ENCODE measurements at regions of chr5 and their contacts with region 1.

Region 1: GRCh38 chr5:78984439-78985115 is 533 bp downstream of the ARSB start:
- DNase-seq: peak; percentile 86
- ATAC-seq: peak; percentile 72
- H3K4me3 Mint-ChIP-seq: peak overlapping the region; percentile 82
- H3K27ac Mint-ChIP-seq: peak overlapping the region; percentile 88
- H3K4me1 Mint-ChIP-seq: peaks cover 40% of the 10 kb centered on the region
- H3K27me3 Mint-ChIP-seq: no peaks in the 10 kb centered on the region

Region 2: DNA sequence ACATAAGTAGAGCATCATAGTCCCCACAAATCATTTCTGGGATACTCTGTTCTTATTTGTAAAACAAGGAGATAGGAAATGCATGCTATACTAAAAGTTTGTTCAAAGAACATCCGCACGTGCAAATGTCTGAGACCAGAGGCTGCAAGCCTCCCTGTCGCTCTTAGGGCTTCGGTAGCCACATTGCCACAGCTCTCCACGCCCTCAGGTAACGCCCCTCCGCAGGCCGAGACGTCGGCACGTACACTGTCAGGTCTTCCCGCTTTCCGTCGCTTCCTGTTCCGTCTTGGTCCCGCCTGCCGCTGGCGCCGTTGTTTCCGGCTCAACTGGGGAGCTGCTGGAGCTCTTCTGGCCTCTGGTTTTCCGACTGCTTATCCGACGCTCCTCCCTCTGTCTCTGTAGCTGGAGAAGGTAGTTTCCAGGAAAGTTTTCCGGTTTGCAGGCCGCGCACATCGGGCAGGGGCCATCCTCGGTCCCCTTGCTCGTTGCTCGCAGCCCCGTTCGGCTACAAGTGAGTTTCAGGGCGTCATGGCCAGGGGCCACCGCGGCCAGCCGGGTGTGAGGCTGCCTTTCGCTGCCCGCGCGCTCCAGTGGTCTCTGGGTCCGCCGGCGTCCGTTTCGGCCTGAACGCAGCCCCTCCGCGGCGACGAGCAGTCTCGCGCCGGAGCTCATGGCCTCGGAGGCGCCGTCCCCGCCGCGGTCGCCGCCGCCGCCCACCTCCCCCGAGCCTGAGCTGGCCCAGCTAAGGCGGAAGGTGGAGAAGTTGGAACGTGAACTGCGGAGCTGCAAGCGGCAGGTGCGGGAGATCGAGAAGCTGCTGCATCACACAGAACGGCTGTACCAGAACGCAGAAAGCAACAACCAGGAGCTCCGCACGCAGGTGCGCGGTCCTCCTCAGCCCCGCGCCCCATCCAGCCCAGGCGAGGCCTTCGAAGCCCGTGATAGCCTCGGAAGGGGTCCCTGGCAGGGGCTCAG is 1954.2 kb before region 1 on chr5 and contains the start of gene AGGF1:
- CTCF ChIA-PET with region 1: no interaction called
- POLR2A ChIA-PET with region 1: no interaction called
- intact Hi-C with region 1: loop called in 1 of 2 experiments (anchors 1 kb)
- DNase-seq: peak; percentile 96
- ATAC-seq: peak; percentile 98
- H3K4me3 Mint-ChIP-seq: peak within 1 kb of the TSS; percentile 87
- H3K27ac Mint-ChIP-seq: peak within 1 kb of the TSS; percentile 94
- H3K4me1 Mint-ChIP-seq: peaks cover 30% of the 10 kb centered on the region
- H3K27me3 Mint-ChIP-seq: no peaks in the 10 kb centered on the region
- total RNA-seq, gene AGGF1: 25.5 to 33.2 TPM

Region 3: DNA sequence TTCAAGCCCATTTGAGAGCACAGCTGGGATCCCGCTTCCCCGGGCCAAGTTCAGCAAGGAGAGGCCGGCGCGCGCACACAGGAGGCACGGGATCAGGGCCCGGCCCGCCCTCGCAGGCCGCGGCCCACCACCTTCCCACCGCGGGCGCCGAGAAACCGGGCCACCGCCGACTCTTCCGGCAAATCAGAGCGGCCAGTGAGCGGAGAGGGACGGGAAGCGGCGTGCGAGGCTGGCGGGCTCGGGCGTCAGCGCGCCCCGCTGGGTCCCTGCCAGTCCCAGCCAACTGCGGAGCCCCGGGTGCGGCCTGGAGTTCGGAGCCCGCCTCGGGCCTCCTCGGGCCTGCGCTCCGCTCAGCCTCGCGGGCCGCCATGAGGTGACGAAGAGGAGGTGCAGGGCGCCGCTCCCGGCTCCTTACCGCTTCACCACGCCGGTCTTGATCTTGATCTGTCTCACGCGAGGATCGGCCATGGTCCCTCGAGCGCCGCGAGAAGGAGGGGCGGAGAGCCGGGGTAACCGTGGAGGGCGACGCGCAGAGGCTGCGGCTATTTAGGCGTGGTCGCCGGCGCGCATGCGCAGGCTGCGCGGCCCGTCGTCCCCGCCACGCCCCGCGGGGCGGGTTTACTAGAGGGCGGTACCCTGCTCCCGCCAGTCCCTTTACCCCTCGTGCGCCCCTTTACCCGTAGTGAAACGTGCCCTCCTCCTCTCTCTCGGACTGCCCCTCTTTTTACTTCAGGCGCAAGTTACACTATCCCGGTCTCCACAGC is 1208.6 kb before region 1 on chr5 and contains the start of gene TBCA:
- CTCF ChIA-PET with region 1: no interaction called
- POLR2A ChIA-PET with region 1: no interaction called
- intact Hi-C with region 1: loop called in 1 of 2 experiments (anchors 10 kb)
- DNase-seq: peak; percentile 92
- ATAC-seq: peak; percentile 88
- H3K4me3 Mint-ChIP-seq: peak within 1 kb of the TSS; percentile 98
- H3K27ac Mint-ChIP-seq: peak within 1 kb of the TSS; percentile 95
- H3K4me1 Mint-ChIP-seq: peaks cover 52% of the 10 kb centered on the region
- H3K27me3 Mint-ChIP-seq: no peaks in the 10 kb centered on the region
- total RNA-seq, gene TBCA: 195 to 210 TPM

Region 4: DNA sequence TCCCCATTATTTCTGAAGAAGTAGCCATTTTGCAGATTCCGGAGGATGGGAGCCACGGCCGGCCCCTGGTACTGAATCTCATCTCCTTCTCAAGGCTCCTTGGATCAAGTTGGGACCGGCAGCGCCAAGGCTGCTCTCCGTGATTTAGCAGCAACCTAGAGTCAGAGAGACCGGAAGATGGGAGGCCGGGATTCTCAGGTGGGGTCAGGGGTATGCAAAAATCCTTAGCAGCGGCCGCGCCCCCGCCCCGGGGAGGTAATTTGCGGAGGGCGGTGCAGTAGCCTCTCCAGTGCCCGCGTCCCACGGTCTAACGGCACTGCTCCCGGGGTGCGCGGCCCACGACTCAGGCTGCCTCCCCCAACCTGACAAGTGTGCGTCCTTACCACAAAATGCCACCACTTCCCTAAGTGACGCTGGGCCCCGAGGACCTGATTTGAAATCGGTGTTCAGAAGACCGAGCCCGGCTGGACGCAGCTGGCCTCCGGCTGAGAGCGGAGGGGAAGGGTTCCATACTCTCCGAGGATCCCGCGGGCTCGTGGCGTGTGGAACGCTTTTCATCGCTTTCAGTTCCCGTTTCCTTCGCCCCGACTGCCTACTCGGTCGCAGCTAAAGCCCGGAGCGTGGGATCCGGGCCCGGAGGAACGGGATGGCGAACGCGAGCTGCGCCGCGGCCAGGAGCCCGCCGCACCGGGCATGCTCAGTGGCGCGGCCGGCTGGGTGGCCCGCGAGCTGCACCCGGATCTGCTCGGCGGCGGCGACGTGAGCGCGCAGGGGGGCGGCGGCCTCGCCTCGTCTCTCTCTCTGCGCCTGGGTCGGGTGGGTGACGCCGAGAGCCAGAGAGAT is 624.5 kb before region 1 on chr5 and contains the start of gene SCAMP1:
- CTCF ChIA-PET with region 1: no interaction called
- POLR2A ChIA-PET with region 1: no interaction called
- intact Hi-C with region 1: loop called in 1 of 2 experiments (anchors 1 kb)
- DNase-seq: peak; percentile 95
- ATAC-seq: peak; percentile 94
- H3K4me3 Mint-ChIP-seq: peak within 1 kb of the TSS; percentile 94
- H3K27ac Mint-ChIP-seq: peak within 1 kb of the TSS; percentile 97
- H3K4me1 Mint-ChIP-seq: peaks cover 35% of the 10 kb centered on the region
- H3K27me3 Mint-ChIP-seq: no peaks in the 10 kb centered on the region
- total RNA-seq, gene SCAMP1: 15.5 to 24.1 TPM

Region 5: GRCh38 chr5:79235634-79236363 is 251.2 kb after region 1 on chr5 and contains the start of gene JMY:
- CTCF ChIA-PET with region 1: no interaction called
- POLR2A ChIA-PET with region 1: no interaction called
- intact Hi-C with region 1: loop called (anchors 1 to 5 kb)
- DNase-seq: peak; percentile 93
- ATAC-seq: peak; percentile 78
- H3K4me3 Mint-ChIP-seq: peak within 1 kb of the TSS; percentile 97
- H3K27ac Mint-ChIP-seq: peak within 1 kb of the TSS; percentile 99
- H3K4me1 Mint-ChIP-seq: peaks cover 25% of the 10 kb centered on the region
- H3K27me3 Mint-ChIP-seq: no peaks in the 10 kb centered on the region
- total RNA-seq, gene JMY: 7.3 to 7.4 TPM

Region 6: GRCh38 chr5:79612667-79613198 is 628.2 kb after region 1 on chr5:
- CTCF ChIA-PET with region 1: no interaction called
- POLR2A ChIA-PET with region 1: no interaction called
- intact Hi-C with region 1: loop called in 1 of 2 experiments (anchors 2 kb)
- DNase-seq: no peak
- ATAC-seq: no peak
- H3K4me3 Mint-ChIP-seq: peak overlapping the region; percentile 96
- H3K27ac Mint-ChIP-seq: peak overlapping the region; percentile 97
- H3K4me1 Mint-ChIP-seq: peaks cover 35% of the 10 kb centered on the region
- H3K27me3 Mint-ChIP-seq: no peaks in the 10 kb centered on the region

Region 7: DNA sequence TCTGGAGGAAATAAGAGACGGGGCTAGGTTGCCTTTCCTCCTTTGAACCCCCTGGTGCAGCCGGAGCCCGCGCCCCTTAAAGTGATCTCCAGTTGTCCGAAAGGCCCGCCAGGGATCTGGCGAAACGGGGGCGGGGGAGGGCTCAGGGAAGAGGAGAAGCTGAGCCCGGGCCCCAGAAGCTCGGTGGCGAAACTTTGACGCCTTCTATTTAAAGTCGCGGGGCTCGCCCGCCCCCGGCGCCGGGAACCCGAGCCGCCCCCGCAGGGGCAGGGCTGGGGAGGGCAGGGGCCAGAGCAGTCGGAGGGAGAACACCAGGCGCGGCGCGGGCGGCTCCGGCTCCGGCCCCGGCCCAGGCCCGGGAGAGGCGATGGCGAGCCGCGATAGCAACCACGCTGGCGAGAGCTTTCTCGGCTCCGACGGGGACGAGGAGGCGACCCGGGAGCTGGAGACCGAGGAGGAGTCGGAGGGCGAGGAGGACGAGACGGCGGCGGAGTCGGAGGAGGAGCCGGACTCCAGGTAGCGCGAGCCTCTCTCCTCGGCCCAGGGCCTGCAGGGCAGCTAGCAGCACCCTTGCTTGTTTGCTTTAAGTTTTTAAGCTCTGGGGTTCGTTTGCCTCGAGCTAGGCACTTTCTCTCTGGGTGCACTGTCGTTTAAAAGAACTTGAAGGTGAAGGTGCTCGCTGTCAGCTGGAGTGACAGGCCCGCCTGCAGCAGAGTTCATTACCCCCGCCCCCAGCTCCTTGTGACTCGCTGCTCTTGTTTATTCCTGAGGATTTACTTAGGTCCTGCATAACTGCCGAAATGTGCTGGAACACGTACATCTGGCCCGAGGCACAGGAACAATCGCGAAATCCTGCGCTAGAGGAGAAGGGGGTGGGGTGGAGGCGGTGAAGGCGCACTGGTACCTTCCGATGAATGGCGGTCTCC is 705.2 kb after region 1 on chr5 and contains the start of gene CMYA5:
- CTCF ChIA-PET with region 1: no interaction called
- POLR2A ChIA-PET with region 1: no interaction called
- intact Hi-C with region 1: no loop called
- DNase-seq: no peak
- ATAC-seq: no peak
- H3K4me3 Mint-ChIP-seq: no peak within 1 kb of the TSS
- H3K27ac Mint-ChIP-seq: no peak within 1 kb of the TSS
- H3K4me1 Mint-ChIP-seq: peaks cover 7% of the 10 kb centered on the region
- H3K27me3 Mint-ChIP-seq: no peaks in the 10 kb centered on the region
- total RNA-seq, gene CMYA5: 0.21 to 0.25 TPM

Measured in activated CD4-positive, alpha-beta T cell treated with anti-CD3 and anti-CD28 coated beads for 36 hours (primary cell).